ENCODE measurements at regions of chr1 and their contacts with region 1.

Region 1: DNA sequence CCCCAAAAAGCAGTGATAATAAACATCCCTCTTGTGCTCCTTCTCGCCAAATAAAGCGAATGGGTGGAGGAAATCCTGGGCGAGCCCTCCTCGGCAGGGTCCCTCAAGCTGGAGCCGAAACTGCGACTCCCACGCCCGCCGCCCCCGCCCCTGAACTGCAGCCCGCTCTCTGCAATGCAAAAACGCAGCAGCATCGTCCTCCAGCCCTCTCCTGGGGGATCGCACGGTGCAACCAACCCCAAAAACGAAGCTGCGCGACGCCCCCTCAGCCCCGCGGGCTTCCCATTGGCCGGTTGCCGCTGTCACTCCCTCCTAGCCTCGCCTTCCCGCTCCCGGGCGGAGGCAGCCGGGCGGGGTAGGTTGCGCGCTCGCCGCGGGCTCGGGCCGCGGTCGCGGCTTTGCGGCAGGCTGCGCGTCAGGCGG is at the start of gene TMCC2:
- DNase-seq: peak; percentile 84
- ATAC-seq: peak; percentile 98
- H3K4me3 ChIP-seq: peak within 1 kb of the TSS; percentile 90
- H3K27ac ChIP-seq: no peak within 1 kb of the TSS; the same call in 1 of the 2 replicates
- H3K4me1 ChIP-seq: peaks cover 14% of the 10 kb centered on the region
- H3K27me3 ChIP-seq: no peaks in the 10 kb centered on the region
- CTCF ChIP-seq: no peak
- POLR2A ChIP-seq: no peak
- RAD21 ChIP-seq: no peak
- total RNA-seq, gene TMCC2: 2.0 and 2.2 TPM in 2 replicates

Region 2: DNA sequence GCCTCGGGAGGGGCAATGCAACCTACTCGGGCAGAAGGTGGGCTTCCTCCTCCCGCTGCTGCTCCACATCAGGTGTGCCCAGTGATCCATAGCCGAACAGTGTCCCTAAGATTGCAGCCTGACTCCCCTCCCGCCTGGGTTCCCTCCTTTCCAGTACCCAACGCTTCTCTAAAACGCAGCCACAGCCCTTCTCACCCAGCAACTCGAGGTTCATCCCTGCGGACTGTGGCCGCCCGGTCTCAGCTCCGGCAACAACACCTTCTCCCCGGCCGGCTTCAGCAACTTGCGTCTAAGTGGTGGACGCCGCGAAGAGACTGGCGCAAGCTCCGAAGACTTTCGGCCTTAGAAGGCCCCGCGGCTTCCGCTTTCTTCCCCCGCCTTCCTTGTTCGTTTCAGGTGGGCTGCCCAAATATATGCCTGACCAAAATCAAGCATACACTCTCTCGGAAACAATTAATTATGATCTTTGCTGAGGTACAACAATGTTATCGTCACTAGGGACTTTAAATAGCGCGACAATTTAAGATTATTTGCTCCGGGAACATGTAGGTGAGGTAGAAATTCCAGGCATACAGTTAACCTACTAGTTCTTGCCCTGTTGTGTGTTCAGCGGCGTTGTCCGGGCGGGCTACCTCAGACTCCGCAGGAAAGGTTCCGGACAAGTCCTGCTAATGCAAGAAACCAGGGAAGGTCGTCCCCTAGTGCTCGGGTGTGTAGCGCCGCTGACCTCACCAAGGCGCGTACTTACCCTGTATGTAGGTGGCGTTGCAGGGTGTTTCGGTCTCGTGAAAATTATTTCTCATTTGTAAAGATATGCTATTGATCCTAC is 105.7 kb before region 1 on chr1 and contains the start of gene RBBP5:
- CTCF ChIA-PET with region 1: no interaction called
- POLR2A ChIA-PET with region 1: no interaction called
- dilution Hi-C with region 1: no loop called
- in situ Hi-C with region 1: no loop called
- intact Hi-C with region 1: loop called (anchors 1 kb)
- DNase-seq: peak; percentile 98
- ATAC-seq: peak; percentile 99
- H3K4me3 ChIP-seq: peak within 1 kb of the TSS; percentile 89
- H3K27ac ChIP-seq: peak within 1 kb of the TSS; percentile 88
- H3K4me1 ChIP-seq: peaks cover 2% of the 10 kb centered on the region; the same call in 1 of the 2 replicates
- H3K27me3 ChIP-seq: no peaks in the 10 kb centered on the region
- CTCF ChIP-seq: peak; percentile 89
- POLR2A ChIP-seq: peak; percentile 95
- RAD21 ChIP-seq: peak; percentile 61
- total RNA-seq, gene RBBP5: 33.9 and 37.5 TPM in 2 replicates

Region 3: DNA sequence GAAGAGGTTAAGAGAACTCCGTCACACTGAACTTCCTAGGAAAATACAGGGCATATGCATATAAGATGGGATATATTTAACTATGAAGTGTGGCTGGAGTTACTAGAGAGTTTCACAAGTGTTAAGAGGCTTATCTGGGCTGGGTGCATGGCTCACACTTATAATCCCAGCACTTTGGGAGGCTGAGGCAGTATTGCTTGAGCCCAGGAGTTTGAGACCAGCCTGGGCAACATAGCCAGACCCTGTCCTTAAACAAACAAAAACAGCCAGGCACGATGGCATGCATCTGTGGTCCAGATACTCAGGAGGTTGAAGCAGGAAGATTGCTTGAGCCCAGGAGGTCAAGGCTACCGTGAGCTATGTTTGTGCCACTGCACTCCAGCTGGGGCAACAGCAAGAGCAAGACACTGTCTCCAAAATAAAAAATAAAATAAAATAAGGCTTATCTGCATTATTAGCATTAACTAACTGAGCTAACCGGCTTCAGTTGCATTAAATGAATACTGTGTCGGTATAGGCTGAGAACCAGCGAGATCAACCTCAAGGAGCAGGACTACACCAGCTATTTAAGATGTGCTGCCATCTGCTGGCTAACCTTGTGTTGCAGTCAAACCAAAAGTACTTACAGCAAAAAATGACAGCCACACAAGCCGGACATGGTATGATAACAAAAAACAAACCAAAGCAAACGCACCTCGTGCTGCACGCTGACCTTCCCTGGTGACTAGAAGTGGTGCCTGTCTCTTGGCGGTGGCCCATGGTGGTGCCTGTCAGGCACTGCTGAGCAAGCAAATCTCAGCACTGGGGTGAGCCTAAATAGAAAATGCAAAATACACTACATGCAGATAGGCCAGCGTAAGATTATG is 86.1 kb before region 1 on chr1:
- CTCF ChIA-PET with region 1: interaction called, 4 read pairs
- POLR2A ChIA-PET with region 1: no interaction called
- dilution Hi-C with region 1: no loop called
- in situ Hi-C with region 1: no loop called
- intact Hi-C with region 1: loop called (anchors 5 kb)
- DNase-seq: peak; percentile 86
- ATAC-seq: peak; percentile 79
- H3K4me3 ChIP-seq: no peak overlapping the region
- H3K27ac ChIP-seq: no peak overlapping the region
- H3K4me1 ChIP-seq: peaks cover 16% of the 10 kb centered on the region
- H3K27me3 ChIP-seq: no peaks in the 10 kb centered on the region
- CTCF ChIP-seq: peak; percentile 73
- POLR2A ChIP-seq: no peak
- RAD21 ChIP-seq: peak; percentile 71

Region 4: GRCh38 chr1:205172729-205173366 is 54.7 kb before region 1 on chr1:
- CTCF ChIA-PET with region 1: no interaction called
- POLR2A ChIA-PET with region 1: no interaction called
- dilution Hi-C with region 1: no loop called
- in situ Hi-C with region 1: no loop called
- intact Hi-C with region 1: no loop called
- DNase-seq: peak; percentile 99
- ATAC-seq: peak; percentile 77
- H3K4me3 ChIP-seq: no peak overlapping the region
- H3K27ac ChIP-seq: peak overlapping the region; percentile 90
- H3K4me1 ChIP-seq: peaks cover 8% of the 10 kb centered on the region
- H3K27me3 ChIP-seq: no peaks in the 10 kb centered on the region
- CTCF ChIP-seq: no peak
- POLR2A ChIP-seq: no peak
- RAD21 ChIP-seq: no peak

Region 5: DNA sequence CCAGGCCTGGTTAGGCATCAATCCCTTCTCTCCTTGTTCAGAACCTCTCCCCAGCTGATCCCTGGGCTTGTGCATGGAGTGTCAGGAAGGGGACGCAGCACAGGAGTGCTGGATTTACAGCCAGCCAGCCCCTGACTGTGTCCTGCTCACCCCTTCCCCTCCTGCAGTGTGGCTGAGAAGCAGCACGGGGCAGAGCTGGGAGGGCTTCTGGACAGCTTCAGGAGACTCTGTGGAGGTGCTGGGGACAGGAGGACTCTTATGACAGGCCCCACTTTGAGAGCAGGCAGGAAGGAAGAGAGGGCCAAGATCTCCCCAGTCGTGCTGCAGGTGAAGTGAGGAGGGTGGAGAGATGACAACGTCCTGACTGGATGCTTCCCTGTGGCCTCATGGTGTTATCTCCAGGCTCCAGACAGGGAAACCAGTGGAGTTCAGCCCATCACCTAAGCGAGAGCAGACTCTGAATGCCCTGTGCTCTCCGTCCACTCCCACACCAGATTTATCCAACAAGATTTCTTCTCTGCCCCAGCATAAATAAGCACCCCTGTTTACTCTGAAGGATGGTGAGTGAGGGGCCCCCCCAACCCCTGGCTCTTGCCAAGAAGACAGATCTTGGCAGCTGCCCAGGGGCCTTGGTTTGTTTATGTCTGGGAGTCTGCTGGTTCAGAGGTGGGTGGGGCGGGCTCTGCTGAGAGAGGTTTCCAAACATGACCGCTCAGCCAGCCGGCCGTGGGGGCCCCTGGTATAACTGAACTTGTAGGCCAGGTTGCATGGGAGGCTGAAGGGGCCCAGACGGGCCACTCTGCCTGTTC is 21.4 kb after region 1 on chr1:
- CTCF ChIA-PET with region 1: interaction called, 11 read pairs
- POLR2A ChIA-PET with region 1: interaction called, 3 read pairs
- dilution Hi-C with region 1: no loop called
- in situ Hi-C with region 1: no loop called
- intact Hi-C with region 1: no loop called
- DNase-seq: peak; percentile 75
- ATAC-seq: peak; percentile 74
- H3K4me3 ChIP-seq: no peak overlapping the region
- H3K27ac ChIP-seq: peak overlapping the region; percentile 10; the same call in 1 of the 2 replicates
- H3K4me1 ChIP-seq: peaks cover 26% of the 10 kb centered on the region
- H3K27me3 ChIP-seq: no peaks in the 10 kb centered on the region
- CTCF ChIP-seq: no peak
- POLR2A ChIP-seq: no peak
- RAD21 ChIP-seq: no peak

Region 6: DNA sequence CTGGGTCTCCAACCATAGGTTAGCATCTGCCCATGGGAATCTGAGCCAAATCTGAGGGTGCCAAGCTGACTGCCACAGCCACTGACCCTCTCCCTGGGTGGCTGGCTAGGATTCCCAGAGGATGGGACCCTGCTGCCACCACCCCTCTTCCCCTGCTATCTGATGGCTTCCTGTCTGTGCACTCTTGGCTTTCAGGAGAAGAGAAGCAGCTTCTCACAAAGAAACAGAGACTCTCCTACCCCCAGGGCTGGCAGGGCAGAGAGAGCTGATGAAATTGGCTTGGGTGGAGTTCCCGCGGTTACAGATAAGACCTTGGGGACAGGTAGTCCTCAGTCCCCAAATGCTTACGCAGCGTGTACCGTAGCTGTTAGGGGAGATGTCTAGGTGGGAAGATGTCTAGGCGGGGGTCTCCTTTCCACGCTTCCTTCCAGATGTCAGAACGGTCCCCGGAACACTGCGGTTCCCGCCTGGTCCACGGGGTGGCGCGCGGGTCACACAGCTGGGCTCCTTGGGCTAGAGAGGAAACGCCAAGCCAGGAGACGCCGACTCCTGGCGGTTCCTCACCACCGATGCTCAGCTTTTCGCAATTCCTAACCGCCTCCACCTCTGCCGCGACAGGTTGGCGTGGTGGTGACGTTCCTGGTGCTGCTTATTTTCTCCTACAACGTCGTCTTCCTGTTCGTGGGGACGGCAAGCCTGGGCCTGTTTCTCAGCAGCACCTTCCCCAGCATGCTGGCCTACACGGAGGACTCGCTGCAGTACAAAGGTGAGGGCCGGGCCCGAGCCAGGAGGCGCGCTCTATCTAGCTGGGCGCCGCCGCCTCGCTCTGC is 364.1 kb after region 1 on chr1:
- CTCF ChIA-PET with region 1: no interaction called
- POLR2A ChIA-PET with region 1: no interaction called
- dilution Hi-C with region 1: no loop called
- in situ Hi-C with region 1: no loop called
- intact Hi-C with region 1: no loop called
- DNase-seq: peak; percentile 74
- ATAC-seq: peak; percentile 97
- H3K4me3 ChIP-seq: peak overlapping the region; percentile 46
- H3K27ac ChIP-seq: peak overlapping the region; percentile 11; the same call in 1 of the 2 replicates
- H3K4me1 ChIP-seq: peaks cover 4% of the 10 kb centered on the region
- H3K27me3 ChIP-seq: no peaks in the 10 kb centered on the region
- CTCF ChIP-seq: peak; percentile 99
- POLR2A ChIP-seq: peak; percentile 55; the same call in 1 of the 2 replicates
- RAD21 ChIP-seq: peak; percentile 100

Measured in IMR-90 (cell line).